PC-3 (cell line): ENCODE measurements at regions of chr11 and their contacts with region 1.

Region 1: GRCh38 chr11:128884703-128885338 is 6.3 kb upstream of the KCNJ5 start:
- DNase-seq: peak; percentile 93
- ATAC-seq: peak; percentile 92
- H3K4me3 ChIP-seq: peak overlapping the region; percentile 45; the same call in 1 of the 2 replicates
- H3K27ac ChIP-seq: no peak overlapping the region
- H3K4me1 ChIP-seq: no peaks in the 10 kb centered on the region
- H3K27me3 ChIP-seq: peaks cover 15% of the 10 kb centered on the region; the same call in 1 of the 2 replicates
- CTCF ChIP-seq: peak; percentile 91

Region 2: DNA sequence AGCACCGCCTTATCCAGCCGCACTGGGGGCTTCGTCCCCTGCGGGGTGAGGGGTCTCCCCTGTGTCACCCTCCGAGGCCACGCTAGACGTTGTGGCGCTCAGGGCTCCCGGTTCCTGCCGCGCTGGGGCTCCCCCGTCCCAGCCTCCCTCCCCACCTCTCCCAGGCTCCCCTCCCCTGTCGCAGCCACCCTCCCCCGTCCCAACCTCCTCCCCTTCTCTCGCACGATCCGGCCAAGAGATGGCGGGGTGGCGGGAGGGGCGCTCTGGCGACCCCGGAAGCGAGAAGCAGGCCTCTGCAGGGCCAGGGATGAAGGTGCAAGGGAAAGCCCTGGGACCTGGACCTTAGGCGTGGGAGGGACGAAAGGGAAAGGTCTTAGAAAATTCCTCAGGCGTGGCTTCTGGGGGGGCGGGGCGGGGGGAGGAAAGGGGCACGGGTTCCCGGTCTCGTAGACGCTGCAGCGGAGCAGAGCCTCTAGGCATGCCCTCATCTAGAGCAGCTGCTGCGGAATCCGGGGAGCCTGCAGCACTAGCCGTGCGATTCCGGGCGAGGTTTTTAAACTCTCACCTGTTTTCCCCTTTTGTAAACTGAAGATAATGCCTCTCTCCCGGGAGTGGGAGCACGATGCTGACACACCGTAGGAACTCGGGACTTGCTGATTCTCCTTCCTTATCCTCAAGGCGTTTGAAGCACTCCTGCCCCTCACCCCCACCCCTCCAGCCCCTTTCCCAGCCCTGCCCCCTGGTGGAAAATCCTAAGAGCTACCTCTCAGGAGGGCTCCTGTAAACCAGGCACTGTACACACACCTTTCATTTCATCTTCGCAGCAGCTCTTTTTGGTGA is 20.7 kb after region 1 on chr11:
- CTCF ChIA-PET with region 1: interaction called, 3 read pairs
- POLR2A ChIA-PET with region 1: no interaction called
- intact Hi-C with region 1: loop called (anchors 1 kb)
- DNase-seq: peak; percentile 77
- ATAC-seq: peak; percentile 76
- H3K4me3 ChIP-seq: peak overlapping the region; percentile 85
- H3K27ac ChIP-seq: no peak overlapping the region
- H3K4me1 ChIP-seq: peaks cover 19% of the 10 kb centered on the region
- H3K27me3 ChIP-seq: no peaks in the 10 kb centered on the region
- CTCF ChIP-seq: peak; percentile 76

Region 3: DNA sequence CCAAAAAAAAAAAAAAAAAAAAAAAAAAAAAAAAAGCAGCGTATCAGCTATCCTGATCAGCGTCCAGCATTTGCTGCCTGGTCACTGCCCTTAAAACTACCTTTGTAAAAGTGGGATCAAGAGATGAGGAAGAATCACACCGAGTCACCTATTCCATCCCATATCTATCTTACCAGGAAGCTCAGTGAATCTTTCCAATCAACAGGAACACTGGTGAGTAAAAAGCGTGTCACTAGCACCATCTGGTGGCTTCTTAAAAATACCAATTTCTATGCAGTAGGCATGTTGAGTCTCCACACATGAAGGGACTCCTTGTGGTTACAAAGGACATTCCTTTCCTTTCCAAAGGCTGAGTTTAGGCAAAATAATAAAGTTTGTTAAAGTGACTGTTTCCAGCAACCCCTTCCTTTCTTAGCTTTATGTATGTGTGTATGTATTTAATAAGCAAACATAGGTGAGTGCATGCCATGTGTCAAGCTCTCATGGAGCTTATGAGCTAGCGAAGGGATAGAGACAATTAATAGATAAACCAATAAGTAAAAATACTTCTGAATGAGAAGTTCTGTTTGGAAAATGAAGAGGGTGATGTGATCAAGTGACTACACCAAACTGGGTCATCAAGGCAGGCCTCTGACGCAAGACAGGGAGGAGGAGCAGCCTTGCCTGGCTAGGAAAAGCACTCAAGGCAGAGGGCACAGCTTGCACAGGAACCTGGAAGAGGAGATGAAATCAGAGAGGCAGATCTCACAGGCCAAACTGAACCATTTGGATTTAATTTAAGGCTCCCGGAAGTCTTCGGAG is 71.8 kb after region 1 on chr11:
- CTCF ChIA-PET with region 1: interaction called, 41 read pairs
- POLR2A ChIA-PET with region 1: interaction called, 3 read pairs
- intact Hi-C with region 1: loop called (anchors 1 kb)
- DNase-seq: peak; percentile 95
- ATAC-seq: peak; percentile 93
- H3K4me3 ChIP-seq: no peak overlapping the region
- H3K27ac ChIP-seq: no peak overlapping the region
- H3K4me1 ChIP-seq: no peaks in the 10 kb centered on the region
- H3K27me3 ChIP-seq: no peaks in the 10 kb centered on the region
- CTCF ChIP-seq: peak; percentile 94

Region 4: DNA sequence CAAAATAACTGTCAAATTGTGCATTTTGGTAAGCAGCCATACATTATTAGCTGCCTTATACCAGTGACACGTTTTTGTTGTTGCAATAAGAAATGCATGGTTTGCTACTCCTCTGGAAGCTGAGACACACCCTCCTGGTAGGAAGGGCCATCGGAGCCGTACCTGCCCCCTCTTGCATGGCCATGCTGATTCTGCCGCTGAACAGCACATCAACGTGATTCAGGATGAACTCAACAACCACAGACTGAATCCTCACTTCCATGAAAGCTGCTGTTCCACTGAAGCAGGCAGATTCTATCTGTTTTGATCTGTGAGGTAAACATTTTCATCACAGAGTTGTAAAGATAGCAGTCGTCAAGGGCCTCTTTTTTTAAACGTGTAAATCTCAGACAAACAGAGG is 96.4 kb after region 1 on chr11:
- CTCF ChIA-PET with region 1: no interaction called
- POLR2A ChIA-PET with region 1: no interaction called
- intact Hi-C with region 1: no loop called
- DNase-seq: peak; percentile 87
- ATAC-seq: peak; percentile 98
- H3K4me3 ChIP-seq: no peak overlapping the region
- H3K27ac ChIP-seq: peak overlapping the region; percentile 34
- H3K4me1 ChIP-seq: peaks cover 15% of the 10 kb centered on the region
- H3K27me3 ChIP-seq: no peaks in the 10 kb centered on the region
- CTCF ChIP-seq: no peak

Region 5: DNA sequence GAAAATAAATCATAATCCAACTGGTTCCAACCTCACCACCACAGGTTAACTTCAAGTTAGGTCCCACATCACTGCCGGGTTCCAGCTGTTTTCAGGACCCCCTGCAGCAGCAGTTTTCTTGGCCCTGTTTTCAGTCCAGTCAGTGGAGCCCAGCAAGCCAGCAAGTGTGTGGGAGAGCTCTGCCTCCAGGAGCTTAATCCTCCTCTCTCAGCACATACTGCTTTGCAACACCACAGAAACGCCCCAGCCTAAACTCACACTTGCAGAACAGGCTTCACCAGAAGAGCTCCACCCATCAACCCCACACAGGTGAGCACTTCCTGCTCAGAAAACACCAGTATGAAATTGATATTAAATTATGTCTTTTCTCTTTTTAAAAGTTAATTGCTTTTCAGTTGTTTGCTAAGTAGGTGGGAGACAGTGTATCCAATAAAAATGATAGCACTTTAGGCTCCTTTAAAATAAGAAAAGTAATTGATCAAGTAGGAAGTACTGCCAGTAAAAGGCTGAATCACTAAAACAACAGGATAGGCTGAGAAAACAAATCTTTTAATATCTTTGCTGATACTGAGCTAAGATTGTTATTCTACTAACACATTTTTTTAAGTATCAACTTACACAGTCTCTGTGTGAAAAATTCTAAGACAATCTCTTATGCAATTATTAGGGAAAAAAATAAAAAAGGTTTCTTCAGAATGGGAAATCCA is 139.3 kb after region 1 on chr11:
- CTCF ChIA-PET with region 1: no interaction called
- POLR2A ChIA-PET with region 1: no interaction called
- intact Hi-C with region 1: loop called (anchors 10 kb)
- DNase-seq: peak; percentile 96
- ATAC-seq: peak; percentile 96
- H3K4me3 ChIP-seq: peak overlapping the region; percentile 61
- H3K27ac ChIP-seq: peak overlapping the region; percentile 82
- H3K4me1 ChIP-seq: peaks cover 48% of the 10 kb centered on the region
- H3K27me3 ChIP-seq: no peaks in the 10 kb centered on the region
- CTCF ChIP-seq: no peak